WTC11 (cell line): ENCODE measurements at regions of chr2 and their contacts with region 1.

Region 1: GRCh38 chr2:23414871-23415270 is 29.9 kb downstream of the KLHL29 start:
- DNase-seq: peak; percentile 44
- ATAC-seq: peak; percentile 94
- H3K4me3 Mint-ChIP-seq: no peak overlapping the region
- H3K27ac Mint-ChIP-seq: no peak overlapping the region
- H3K4me1 Mint-ChIP-seq: peaks cover 17% of the 10 kb centered on the region
- H3K27me3 Mint-ChIP-seq: no peaks in the 10 kb centered on the region
- CTCF ChIP-seq: peak; percentile 23; the same call in 1 of the 2 replicates

Region 2: DNA sequence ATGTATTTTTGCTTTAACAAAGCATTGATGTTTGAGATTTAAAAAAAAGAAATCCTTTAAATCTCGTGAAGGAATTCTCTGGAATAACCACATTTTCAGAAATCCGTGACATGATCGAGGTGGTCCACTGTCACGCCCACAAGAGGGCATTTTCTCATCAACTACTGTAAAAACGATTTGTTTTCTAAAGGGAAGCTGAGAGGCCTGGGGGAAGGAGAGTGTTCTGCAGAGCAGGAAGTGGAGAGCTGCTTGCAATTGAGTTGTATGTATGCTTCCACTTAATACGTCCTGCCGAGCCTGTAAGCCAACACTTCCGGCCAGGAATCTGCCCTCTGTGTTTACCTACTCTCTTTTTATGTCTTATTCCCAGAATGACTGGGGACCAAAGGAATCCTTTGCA is 10.4 kb before region 1 on chr2:
- CTCF ChIA-PET with region 1: interaction called, 13 read pairs
- POLR2A ChIA-PET with region 1: no interaction called
- DNase-seq: no peak
- ATAC-seq: peak; percentile 92
- H3K4me3 Mint-ChIP-seq: peak overlapping the region; percentile 14; the same call in 1 of the 2 replicates
- H3K27ac Mint-ChIP-seq: peak overlapping the region; percentile 91
- H3K4me1 Mint-ChIP-seq: peaks cover 36% of the 10 kb centered on the region
- H3K27me3 Mint-ChIP-seq: no peaks in the 10 kb centered on the region
- CTCF ChIP-seq: no peak